Endothelial cell of umbilical vein (primary cell): ENCODE measurements at regions of chr20 and their contacts with region 1.

Region 1: GRCh38 chr20:35146920-35147574 is at the start of gene EDEM2:
- DNase-seq: peak; percentile 93
- H3K4me3 ChIP-seq: peak within 1 kb of the TSS; percentile 49 to 85 (median 82)
- H3K27ac ChIP-seq: peak within 1 kb of the TSS; percentile 81
- H3K4me1 ChIP-seq: peaks cover 24% of the 10 kb centered on the region
- H3K27me3 ChIP-seq: no peaks in the 10 kb centered on the region
- CTCF ChIP-seq: peak in 1 of 2 donors; percentile 10
- POLR2A ChIP-seq: peak; percentile 75
- total RNA-seq, gene EDEM2: 37.5 and 39.5 TPM in 2 replicates

Region 2: GRCh38 chr20:35120012-35120701 is 26.9 kb before region 1 on chr20:
- CTCF ChIA-PET with region 1: interaction called, 17 read pairs
- POLR2A ChIA-PET with region 1: no interaction called
- dilution Hi-C with region 1: no loop called
- intact Hi-C with region 1: no loop called
- DNase-seq: peak; percentile 72
- H3K4me3 ChIP-seq: no peak overlapping the region
- H3K27ac ChIP-seq: peak overlapping the region; percentile 54
- H3K4me1 ChIP-seq: peaks cover 48% of the 10 kb centered on the region
- H3K27me3 ChIP-seq: no peaks in the 10 kb centered on the region
- CTCF ChIP-seq: no peak
- POLR2A ChIP-seq: no peak

Region 3: GRCh38 chr20:35171753-35172433 is 24.8 kb after region 1 on chr20 and contains the start of gene PROCR:
- CTCF ChIA-PET with region 1: interaction called, 82 read pairs
- POLR2A ChIA-PET with region 1: interaction called, 18 read pairs
- dilution Hi-C with region 1: no loop called
- intact Hi-C with region 1: loop called (anchors 1 kb)
- DNase-seq: peak; percentile 98
- H3K4me3 ChIP-seq: peak within 1 kb of the TSS; percentile 70 to 93 (median 80)
- H3K27ac ChIP-seq: peak within 1 kb of the TSS; percentile 79
- H3K4me1 ChIP-seq: peaks cover 37% of the 10 kb centered on the region
- H3K27me3 ChIP-seq: no peaks in the 10 kb centered on the region
- CTCF ChIP-seq: no peak
- POLR2A ChIP-seq: peak; percentile 98
- total RNA-seq, gene PROCR: 228 and 251 TPM in 2 replicates

Region 4: GRCh38 chr20:35200255-35200654 is 53.2 kb after region 1 on chr20:
- CTCF ChIA-PET with region 1: interaction called, 24 read pairs
- POLR2A ChIA-PET with region 1: no interaction called
- dilution Hi-C with region 1: no loop called
- intact Hi-C with region 1: no loop called
- DNase-seq: no peak
- H3K4me3 ChIP-seq: no peak overlapping the region
- H3K27ac ChIP-seq: no peak overlapping the region
- H3K4me1 ChIP-seq: peaks cover 6% of the 10 kb centered on the region
- H3K27me3 ChIP-seq: no peaks in the 10 kb centered on the region
- CTCF ChIP-seq: no peak
- POLR2A ChIP-seq: no peak

Region 5: GRCh38 chr20:35226775-35227681 is 80.0 kb after region 1 on chr20:
- CTCF ChIA-PET with region 1: interaction called, 15 read pairs
- POLR2A ChIA-PET with region 1: interaction called, 3 read pairs
- dilution Hi-C with region 1: no loop called
- intact Hi-C with region 1: no loop called
- DNase-seq: peak; percentile 35
- H3K4me3 ChIP-seq: no peak overlapping the region
- H3K27ac ChIP-seq: no peak overlapping the region
- H3K4me1 ChIP-seq: peaks cover 19% of the 10 kb centered on the region
- H3K27me3 ChIP-seq: peaks cover 8 to 14% of the 10 kb centered on the region in 2 experiments
- CTCF ChIP-seq: no peak
- POLR2A ChIP-seq: no peak

Region 6: GRCh38 chr20:35277531-35278395 is 130.7 kb after region 1 on chr20 and contains the start of gene MMP24OS:
- CTCF ChIA-PET with region 1: interaction called, 177 read pairs
- POLR2A ChIA-PET with region 1: no interaction called
- dilution Hi-C with region 1: no loop called
- intact Hi-C with region 1: no loop called
- DNase-seq: peak; percentile 77
- H3K4me3 ChIP-seq: peak within 1 kb of the TSS; percentile 43 to 80 (median 79)
- H3K27ac ChIP-seq: peak within 1 kb of the TSS; percentile 89
- H3K4me1 ChIP-seq: peaks cover 7% of the 10 kb centered on the region
- H3K27me3 ChIP-seq: no peaks in the 10 kb centered on the region
- CTCF ChIP-seq: peak in 1 of 2 donors; percentile 31
- POLR2A ChIP-seq: peak; percentile 93
- total RNA-seq, gene MMP24OS: 52.8 and 55.6 TPM in 2 replicates

Region 7: GRCh38 chr20:35339007-35339406 is 192.0 kb after region 1 on chr20:
- CTCF ChIA-PET with region 1: no interaction called
- POLR2A ChIA-PET with region 1: no interaction called
- dilution Hi-C with region 1: no loop called
- intact Hi-C with region 1: no loop called
- DNase-seq: no peak
- H3K4me3 ChIP-seq: no peak overlapping the region
- H3K27ac ChIP-seq: no peak overlapping the region
- H3K4me1 ChIP-seq: peaks cover 5% of the 10 kb centered on the region
- H3K27me3 ChIP-seq: no peaks in the 10 kb centered on the region
- CTCF ChIP-seq: no peak
- POLR2A ChIP-seq: no peak

Region 8: DNA sequence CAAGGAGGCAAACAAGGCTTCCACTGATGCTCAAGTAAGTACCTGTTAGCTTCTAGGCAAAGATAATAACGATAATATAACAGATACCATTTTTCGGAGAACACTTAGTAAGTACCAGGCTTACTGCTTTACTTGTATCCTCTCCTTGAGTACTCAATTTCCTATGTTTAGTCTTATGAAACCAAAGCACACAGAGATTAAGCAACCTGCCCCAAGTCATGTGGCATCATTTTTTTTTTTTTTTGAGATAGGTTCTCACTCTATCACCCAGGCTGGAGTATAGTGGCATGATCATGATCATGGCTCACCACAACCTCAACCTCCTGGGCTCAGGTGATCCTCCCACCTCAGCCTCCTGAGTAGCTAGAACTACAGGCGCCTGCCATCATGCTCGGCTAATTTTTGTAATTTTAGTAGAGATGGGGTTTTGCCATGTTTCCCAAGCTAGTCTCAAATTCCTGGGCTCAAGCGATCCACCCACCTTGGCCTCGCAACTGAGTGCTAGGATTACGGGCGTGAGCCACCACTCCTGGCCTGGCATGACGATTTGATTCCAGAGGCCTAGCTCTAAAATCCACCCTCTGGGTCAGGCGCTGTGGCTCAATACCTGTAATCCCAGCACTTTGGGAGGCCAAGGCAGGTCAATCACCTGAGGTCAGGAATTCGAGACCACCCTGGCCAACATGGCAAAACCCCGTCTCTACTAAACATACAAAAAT is 482.5 kb after region 1 on chr20:
- CTCF ChIA-PET with region 1: no interaction called
- POLR2A ChIA-PET with region 1: no interaction called
- dilution Hi-C with region 1: no loop called
- intact Hi-C with region 1: no loop called
- DNase-seq: no peak
- H3K4me3 ChIP-seq: no peak overlapping the region
- H3K27ac ChIP-seq: no peak overlapping the region
- H3K4me1 ChIP-seq: no peaks in the 10 kb centered on the region
- H3K27me3 ChIP-seq: no peaks in the 10 kb centered on the region
- CTCF ChIP-seq: no peak
- POLR2A ChIP-seq: no peak